ENCODE measurements at regions of chr11 and their contacts with region 1.

Region 1: GRCh38 chr11:78416305-78417178 is 1.1 kb downstream of the GAB2 start:
- DNase-seq: peak; percentile 38 to 80 (median 64)
- ATAC-seq: peak; percentile 62 to 64 (median 62)
- H3K4me3 ChIP-seq: peak overlapping the region; percentile 54 to 64
- H3K4me3 Mint-ChIP-seq: peak overlapping the region; percentile 87 to 94 (median 94)
- H3K27ac ChIP-seq: no peak overlapping the region
- H3K27ac Mint-ChIP-seq: peak overlapping the region; percentile 66 to 86
- H3K4me1 ChIP-seq: peaks cover 5 to 25% of the 10 kb centered on the region in 2 experiments
- H3K4me1 Mint-ChIP-seq: peaks cover 17 to 37% (median 22%) of the 10 kb centered on the region in 3 donors
- H3K27me3 ChIP-seq: peaks cover 0 to 20% of the 10 kb centered on the region in 2 experiments
- H3K27me3 Mint-ChIP-seq: peaks cover 15 to 16% of the 10 kb centered on the region in 2 donors

Region 2: DNA sequence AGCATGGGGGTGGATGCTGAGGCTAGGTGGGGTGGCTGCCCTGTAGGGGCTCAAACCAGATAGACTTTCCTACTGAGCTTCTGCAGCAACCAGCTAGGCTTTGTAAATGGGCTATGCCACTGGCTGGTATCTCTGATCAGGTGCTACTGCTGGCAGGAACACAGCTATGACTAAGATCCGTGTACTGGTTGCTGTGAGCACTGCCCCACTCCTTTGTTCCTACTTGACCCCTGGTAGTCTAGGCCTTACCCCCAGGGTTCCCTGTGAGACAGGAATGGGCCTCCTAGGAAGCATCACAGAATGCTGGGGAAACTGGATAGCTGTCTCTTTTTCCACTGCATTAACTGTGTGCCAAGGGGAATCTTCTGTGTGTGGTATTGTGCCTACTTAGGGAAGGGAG is 59.5 kb after region 1 on chr11:
- CTCF ChIA-PET with region 1: interaction called in 1 of 2 experiments, 10 read pairs
- POLR2A ChIA-PET with region 1: no interaction called
- DNase-seq: no peak
- ATAC-seq: no peak
- H3K4me3 ChIP-seq: no peak overlapping the region
- H3K4me3 Mint-ChIP-seq: no peak overlapping the region
- H3K27ac ChIP-seq: no peak overlapping the region
- H3K27ac Mint-ChIP-seq: no peak overlapping the region
- H3K4me1 ChIP-seq: no peaks in the 10 kb centered on the region
- H3K4me1 Mint-ChIP-seq: no peaks in the 10 kb centered on the region
- H3K27me3 ChIP-seq: no peaks in the 10 kb centered on the region
- H3K27me3 Mint-ChIP-seq: no peaks in the 10 kb centered on the region